Naive thymus-derived CD8-positive, alpha-beta T cell (primary cell): ENCODE measurements at regions of chr10 and their contacts with region 1.

Region 1: GRCh38 chr10:72088889-72089575 is 681 bp upstream of the SPOCK2 start:
- DNase-seq: peak in 7 of 10 donors; percentile 44 to 82 (median 62)
- ATAC-seq: peak; percentile 49 to 54
- H3K4me3 Mint-ChIP-seq: peak overlapping the region; percentile 93 to 100 (median 100)
- H3K27ac Mint-ChIP-seq: peak overlapping the region; percentile 97 to 100 (median 100)
- H3K4me1 Mint-ChIP-seq: peaks cover 31 to 55% (median 46%) of the 10 kb centered on the region in 4 donors
- H3K27me3 Mint-ChIP-seq: peaks cover 0 to 3% (median 0%) of the 10 kb centered on the region in 5 donors

Region 2: DNA sequence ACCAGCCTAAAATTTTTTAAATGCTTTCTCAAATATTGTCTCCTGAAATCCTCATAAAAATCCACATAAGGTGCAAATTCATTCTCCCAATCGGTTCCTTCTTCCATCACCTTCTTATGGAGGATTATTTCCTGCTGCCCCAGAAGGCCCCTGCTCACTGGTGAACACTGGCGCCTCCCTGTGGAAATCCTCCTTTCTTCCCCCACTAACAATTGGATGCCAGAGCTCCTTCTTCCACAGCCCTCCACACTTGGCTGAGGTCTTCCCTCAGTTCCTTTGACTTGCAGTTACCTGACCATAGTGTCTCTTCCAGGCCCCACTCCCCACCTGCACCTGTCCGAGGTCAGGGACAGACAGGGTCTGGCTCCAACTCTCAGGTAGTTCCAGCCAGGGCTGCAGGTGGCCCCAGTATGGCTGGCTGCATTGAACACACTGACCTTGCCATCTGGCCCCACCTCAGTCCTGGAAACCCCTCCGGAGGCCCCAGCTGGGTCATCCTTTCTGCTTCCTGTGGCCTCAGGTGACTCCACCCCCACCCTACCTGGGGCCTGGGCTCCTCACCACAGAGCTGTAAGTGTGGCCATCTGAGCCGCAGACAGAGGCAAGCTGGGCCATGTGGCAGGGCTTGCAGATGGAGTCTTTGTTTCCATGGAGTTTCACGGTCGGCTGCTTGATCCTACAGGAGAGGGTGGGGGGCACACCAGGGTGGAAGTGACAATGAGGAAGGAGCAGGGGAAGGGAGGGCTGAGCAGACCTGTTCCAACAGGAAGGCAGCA is 19.1 kb before region 1 on chr10:
- POLR2A ChIA-PET with region 1: interaction called, 29 read pairs
- DNase-seq: peak in 2 of 10 donors; percentile 9 to 41
- ATAC-seq: no peak
- H3K4me3 Mint-ChIP-seq: peak overlapping the region in 3 of 10 donors; percentile 8 to 43 (median 14)
- H3K27ac Mint-ChIP-seq: peak overlapping the region; percentile 83 to 97 (median 90)
- H3K4me1 Mint-ChIP-seq: peaks cover 34 to 72% (median 56%) of the 10 kb centered on the region in 4 donors
- H3K27me3 Mint-ChIP-seq: no peaks in the 10 kb centered on the region

Region 3: GRCh38 chr10:72114706-72115450 is 25.8 kb after region 1 on chr10:
- POLR2A ChIA-PET with region 1: interaction called, 208 read pairs
- DNase-seq: no peak
- ATAC-seq: no peak
- H3K4me3 Mint-ChIP-seq: peak overlapping the region in 1 of 10 donors; percentile 16
- H3K27ac Mint-ChIP-seq: peak overlapping the region in 8 of 10 donors; percentile 3 to 60 (median 23)
- H3K4me1 Mint-ChIP-seq: peaks cover 29 to 45% (median 39%) of the 10 kb centered on the region in 4 donors
- H3K27me3 Mint-ChIP-seq: no peaks in the 10 kb centered on the region

Region 4: DNA sequence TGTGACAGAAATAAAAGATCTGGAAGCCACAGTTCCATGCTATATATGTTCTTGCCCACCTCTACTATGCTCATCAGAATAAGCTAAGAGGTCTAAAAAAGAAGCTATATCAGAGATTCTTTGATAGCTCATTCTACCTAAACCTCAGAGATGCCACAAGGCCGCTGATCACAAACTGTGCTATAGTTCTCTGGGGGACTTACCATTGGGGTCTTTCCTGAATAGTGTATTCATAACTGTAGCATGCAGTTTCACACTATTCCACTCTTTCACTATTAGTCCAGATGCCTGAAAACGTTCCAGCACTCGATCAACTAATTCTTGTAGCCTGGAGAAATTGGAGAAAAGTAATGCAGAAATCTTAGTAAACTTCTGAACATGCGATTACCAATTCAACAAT is 43.8 kb after region 1 on chr10:
- POLR2A ChIA-PET with region 1: interaction called, 33 read pairs
- DNase-seq: no peak
- ATAC-seq: peak in 1 of 2 donors; percentile 20
- H3K4me3 Mint-ChIP-seq: peak overlapping the region in 3 of 10 donors; percentile 8 to 51 (median 46)
- H3K27ac Mint-ChIP-seq: peak overlapping the region; percentile 1 to 94 (median 90)
- H3K4me1 Mint-ChIP-seq: peaks cover 25 to 47% (median 37%) of the 10 kb centered on the region in 4 donors
- H3K27me3 Mint-ChIP-seq: no peaks in the 10 kb centered on the region

Region 5: DNA sequence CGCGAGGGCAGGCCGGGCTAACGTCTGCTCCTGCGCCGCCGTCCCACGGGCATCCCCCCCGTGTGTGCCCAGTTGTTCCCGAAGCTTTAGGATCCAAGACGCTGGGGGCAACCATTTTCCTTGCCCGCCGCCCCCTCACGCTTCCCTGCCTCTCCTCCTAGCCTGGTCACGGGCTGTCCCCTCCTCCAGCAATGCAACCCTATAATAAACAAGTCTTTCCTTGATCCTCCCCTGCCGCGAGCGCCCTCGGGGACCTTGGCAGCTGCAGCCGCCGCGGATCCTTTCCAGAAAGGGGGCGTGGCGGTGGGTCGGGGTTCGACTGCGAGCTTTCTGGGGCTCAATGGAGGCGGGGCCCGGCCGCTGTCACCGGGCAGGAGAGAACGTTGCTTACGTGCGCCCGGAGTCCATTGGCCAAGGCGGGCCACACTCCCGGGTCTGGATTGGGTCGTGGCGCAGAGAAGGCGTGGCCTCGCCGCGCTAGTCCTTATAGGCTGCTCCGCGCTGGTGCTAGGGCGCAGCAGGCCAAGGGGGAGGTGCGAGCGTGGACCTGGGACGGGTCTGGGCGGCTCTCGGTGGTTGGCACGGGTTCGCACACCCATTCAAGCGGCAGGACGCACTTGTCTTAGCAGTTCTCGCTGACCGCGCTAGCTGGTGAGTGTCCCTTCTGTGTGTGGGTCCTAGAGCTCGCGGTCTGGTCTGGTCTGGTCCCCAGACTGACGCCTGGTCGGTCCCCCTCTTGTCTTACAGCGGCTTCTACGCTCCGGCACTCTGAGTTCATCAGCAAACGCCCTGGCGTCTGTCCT is 184.6 kb after region 1 on chr10 and contains the start of gene DDIT4:
- POLR2A ChIA-PET with region 1: interaction called, 10 read pairs
- DNase-seq: peak; percentile 93 to 98 (median 97)
- ATAC-seq: peak; percentile 92 to 93
- H3K4me3 Mint-ChIP-seq: peak within 1 kb of the TSS; percentile 94 to 100 (median 98)
- H3K27ac Mint-ChIP-seq: peak within 1 kb of the TSS; percentile 89 to 99 (median 96)
- H3K4me1 Mint-ChIP-seq: peaks cover 28 to 61% (median 55%) of the 10 kb centered on the region in 4 donors
- H3K27me3 Mint-ChIP-seq: no peaks in the 10 kb centered on the region
- polyA plus RNA-seq, gene DDIT4: 68.0 to 190 (median 189) TPM

Region 6: DNA sequence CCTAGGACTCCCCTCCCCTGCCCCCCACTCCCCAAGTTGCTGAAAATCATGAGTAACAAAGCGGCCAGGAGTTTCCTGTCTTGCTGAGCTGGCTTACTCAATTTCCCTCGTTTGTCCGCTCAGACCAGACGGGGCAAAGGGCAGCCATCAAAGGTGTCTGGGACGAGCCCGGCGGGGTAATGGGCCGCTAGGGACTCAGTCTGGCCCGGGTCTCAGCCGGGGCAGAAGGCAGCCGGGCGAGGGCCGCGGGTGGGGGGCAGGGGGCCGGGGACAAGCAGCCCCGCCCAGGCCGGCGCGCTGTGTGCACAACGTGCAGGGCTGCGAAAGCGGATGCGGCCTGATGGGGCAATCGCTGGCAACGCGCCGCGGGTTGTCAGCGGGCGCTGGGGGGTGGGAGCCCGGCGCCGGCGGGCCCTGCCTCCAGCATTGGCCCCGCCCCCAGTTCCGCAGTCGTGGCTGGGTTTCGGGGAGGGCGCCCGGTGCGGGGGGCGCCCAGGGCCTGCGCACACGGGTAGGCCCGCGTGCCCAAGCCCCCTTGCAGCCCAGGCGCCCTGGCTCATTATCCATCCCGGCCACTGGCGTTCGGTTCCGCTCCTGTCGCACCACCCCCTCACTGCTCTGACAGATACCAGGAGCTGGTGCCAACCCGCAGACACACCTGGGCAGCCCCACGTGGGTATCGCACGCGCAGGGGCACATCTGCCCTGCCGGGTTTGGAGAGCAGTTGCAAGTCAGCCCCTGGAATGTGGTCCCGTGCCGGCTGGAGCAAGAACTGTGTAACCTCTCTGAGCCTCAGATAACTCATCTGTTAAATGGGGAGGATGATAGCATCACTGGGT is 230.6 kb after region 1 on chr10:
- POLR2A ChIA-PET with region 1: interaction called, 28 read pairs
- DNase-seq: peak; percentile 78 to 93 (median 88)
- ATAC-seq: peak; percentile 71 to 82
- H3K4me3 Mint-ChIP-seq: peak overlapping the region; percentile 67 to 85 (median 82)
- H3K27ac Mint-ChIP-seq: peak overlapping the region; percentile 90 to 99 (median 98)
- H3K4me1 Mint-ChIP-seq: peaks cover 46 to 90% (median 88%) of the 10 kb centered on the region in 4 donors
- H3K27me3 Mint-ChIP-seq: no peaks in the 10 kb centered on the region